IMR-90 (cell line): ENCODE measurements at regions of chr4 and their contacts with region 1.

Region 1: DNA sequence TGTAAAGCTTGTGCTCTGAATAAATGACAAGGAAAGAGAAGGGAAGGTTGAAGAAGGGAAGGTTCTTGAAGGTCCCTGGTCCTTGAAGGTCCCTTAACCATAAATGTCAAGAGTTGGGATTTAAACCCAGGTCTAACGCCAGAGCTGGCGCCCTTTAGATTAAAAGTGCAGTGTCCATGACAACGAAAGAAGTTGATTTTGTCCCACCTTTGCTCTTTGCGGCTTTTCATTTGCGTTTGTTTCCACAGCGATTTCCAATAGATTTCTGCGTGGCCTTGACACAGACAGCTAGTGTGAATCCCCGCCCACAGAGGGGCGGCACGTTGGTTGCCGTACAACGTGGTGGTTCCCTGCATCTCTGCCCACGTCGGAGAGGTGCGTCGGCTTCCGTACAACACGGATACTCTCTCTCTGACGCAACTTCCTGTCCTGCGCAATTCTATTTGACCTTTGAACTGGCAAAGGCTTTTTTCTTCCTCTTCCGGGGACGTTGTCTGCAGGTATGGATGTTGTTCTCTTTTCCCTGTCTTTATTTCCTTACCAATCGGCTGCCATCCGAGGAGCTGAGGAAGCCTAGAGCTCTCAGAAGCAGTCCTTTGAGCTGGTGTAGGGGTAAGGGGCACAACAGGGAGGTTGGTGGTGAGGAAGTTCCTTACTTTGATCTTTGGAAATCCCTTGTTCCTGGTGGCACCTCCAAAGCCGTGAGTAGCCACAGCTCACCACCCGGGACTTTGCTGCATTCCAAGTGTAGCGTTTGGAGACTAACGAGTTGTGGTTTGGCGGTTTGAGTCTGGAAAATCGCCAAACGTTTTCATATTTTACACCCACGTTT is at the start of gene RPL34:
- DNase-seq: peak; percentile 99
- ATAC-seq: peak; percentile 100
- H3K4me3 ChIP-seq: peak within 1 kb of the TSS; percentile 78
- H3K27ac ChIP-seq: peak within 1 kb of the TSS; percentile 69
- H3K4me1 ChIP-seq: peaks cover 2% of the 10 kb centered on the region; the same call in 1 of the 2 replicates
- H3K27me3 ChIP-seq: no peaks in the 10 kb centered on the region
- CTCF ChIP-seq: no peak
- POLR2A ChIP-seq: peak; percentile 96
- RAD21 ChIP-seq: no peak; the same call in 1 of the 2 replicates
- total RNA-seq, gene RPL34: 590 and 1,435 TPM in 2 replicates

Region 2: GRCh38 chr4:108502356-108502755 is 118.0 kb before region 1 on chr4:
- CTCF ChIA-PET with region 1: no interaction called
- POLR2A ChIA-PET with region 1: no interaction called
- dilution Hi-C with region 1: no loop called
- in situ Hi-C with region 1: no loop called
- intact Hi-C with region 1: no loop called
- DNase-seq: no peak
- ATAC-seq: no peak
- H3K4me3 ChIP-seq: no peak overlapping the region
- H3K27ac ChIP-seq: no peak overlapping the region
- H3K4me1 ChIP-seq: no peaks in the 10 kb centered on the region
- H3K27me3 ChIP-seq: no peaks in the 10 kb centered on the region
- CTCF ChIP-seq: no peak
- POLR2A ChIP-seq: no peak
- RAD21 ChIP-seq: no peak

Region 3: GRCh38 chr4:108650212-108651013 is 30.1 kb after region 1 on chr4 and contains the start of gene OSTC:
- CTCF ChIA-PET with region 1: no interaction called
- POLR2A ChIA-PET with region 1: no interaction called
- dilution Hi-C with region 1: no loop called
- in situ Hi-C with region 1: no loop called
- intact Hi-C with region 1: loop called (anchors 1 kb)
- DNase-seq: peak; percentile 97
- ATAC-seq: peak; percentile 95
- H3K4me3 ChIP-seq: peak within 1 kb of the TSS; percentile 90
- H3K27ac ChIP-seq: peak within 1 kb of the TSS; percentile 95
- H3K4me1 ChIP-seq: no peaks in the 10 kb centered on the region
- H3K27me3 ChIP-seq: no peaks in the 10 kb centered on the region
- CTCF ChIP-seq: 0 out of 2 replicates have a peak, but pooled peaks have one; percentile 11
- POLR2A ChIP-seq: peak; percentile 84
- RAD21 ChIP-seq: no peak
- total RNA-seq, gene OSTC: 479 and 13,576 TPM in 2 replicates

Region 4: GRCh38 chr4:108762559-108763225 is 142.4 kb after region 1 on chr4 and contains the start of gene ETNPPL:
- CTCF ChIA-PET with region 1: no interaction called
- POLR2A ChIA-PET with region 1: no interaction called
- dilution Hi-C with region 1: no loop called
- in situ Hi-C with region 1: no loop called
- intact Hi-C with region 1: no loop called
- DNase-seq: no peak
- ATAC-seq: peak; percentile 78
- H3K4me3 ChIP-seq: peak within 1 kb of the TSS; percentile 43
- H3K27ac ChIP-seq: no peak within 1 kb of the TSS
- H3K4me1 ChIP-seq: no peaks in the 10 kb centered on the region
- H3K27me3 ChIP-seq: peaks cover 21% of the 10 kb centered on the region
- CTCF ChIP-seq: no peak
- POLR2A ChIP-seq: no peak
- RAD21 ChIP-seq: no peak
- total RNA-seq, gene ETNPPL: not detected in 2 replicates